ENCODE measurements at regions of chr5 and their contacts with region 1.

Region 1: DNA sequence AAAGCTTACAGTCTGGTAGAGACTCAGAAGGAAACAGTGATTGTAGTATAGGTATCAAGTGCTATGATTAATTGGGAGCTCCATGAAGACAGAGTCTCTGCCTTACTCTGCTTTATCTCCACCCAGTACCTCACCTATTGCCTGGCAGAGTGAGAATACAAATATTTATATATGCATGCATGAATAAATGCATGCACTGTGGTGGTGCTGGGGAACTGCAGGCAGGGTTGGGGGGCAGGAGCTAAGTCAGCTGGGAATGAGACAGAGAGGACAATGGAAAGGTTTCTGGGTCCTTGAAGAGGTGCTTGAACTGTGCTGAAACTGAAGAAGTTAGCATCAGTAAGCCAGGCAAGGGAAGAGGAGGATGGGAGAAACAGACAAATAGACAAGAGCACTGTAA is 80.8 kb upstream of the PPP2R2B start:
- DNase-seq: no peak
- ATAC-seq: no peak
- H3K4me3 Mint-ChIP-seq: no peak overlapping the region
- H3K27ac Mint-ChIP-seq: no peak overlapping the region
- H3K4me1 Mint-ChIP-seq: no peaks in the 10 kb centered on the region
- H3K27me3 Mint-ChIP-seq: peaks cover 19% of the 10 kb centered on the region

Region 2: DNA sequence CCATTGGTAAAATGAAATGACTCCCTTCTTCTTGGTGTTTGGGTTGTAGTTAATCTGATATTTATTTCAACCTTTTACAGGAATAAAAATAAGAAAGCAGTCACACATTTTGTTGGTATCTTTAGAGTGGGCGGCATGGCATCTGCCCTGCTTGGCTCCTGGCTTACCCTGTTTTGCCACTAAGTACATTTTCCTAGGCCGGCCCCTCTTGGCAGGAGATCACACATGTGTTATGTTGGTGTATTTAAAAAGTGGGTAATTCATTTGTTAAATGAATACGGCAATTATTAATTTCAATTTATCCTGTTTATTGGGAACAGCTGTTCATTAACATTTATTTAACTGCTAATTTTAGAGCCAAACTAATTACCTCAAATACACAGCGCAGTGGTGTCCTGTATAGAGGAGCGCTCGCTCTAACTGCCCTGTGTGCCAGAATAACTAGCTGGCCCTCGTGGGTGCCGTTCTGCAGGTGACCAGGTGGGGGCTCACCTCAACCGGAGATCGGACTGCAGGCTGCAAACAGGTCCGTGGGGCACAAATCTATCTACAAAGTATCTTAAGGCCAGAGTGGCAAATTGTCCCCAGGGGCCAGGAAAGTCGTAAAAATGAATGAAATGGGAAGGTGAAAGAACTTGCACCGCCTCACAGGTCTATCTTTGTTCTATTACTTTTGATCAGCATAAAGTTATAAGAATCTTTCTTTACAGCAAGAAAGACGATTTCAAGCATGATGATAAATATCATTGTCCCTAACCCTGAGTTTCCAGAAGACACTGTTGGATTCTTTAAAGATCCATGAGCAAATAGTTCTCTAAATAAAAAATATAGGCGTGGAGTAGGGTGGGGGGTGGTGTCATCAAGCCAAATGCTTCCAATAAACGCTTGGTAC is 417.2 kb before region 1 on chr5:
- CTCF ChIA-PET with region 1: interaction called, 73 read pairs
- DNase-seq: peak; percentile 79
- ATAC-seq: peak; percentile 94
- H3K4me3 Mint-ChIP-seq: no peak overlapping the region
- H3K27ac Mint-ChIP-seq: no peak overlapping the region
- H3K4me1 Mint-ChIP-seq: peaks cover 3% of the 10 kb centered on the region
- H3K27me3 Mint-ChIP-seq: peaks cover 5% of the 10 kb centered on the region

Measured in activated CD8-positive, alpha-beta memory T cell treated with anti-CD3 and anti-CD28 coated beads, Interleukin-2, amount 10 ng/mL, durations not matched to agents 7 days and 5 days (primary cell).